Caco-2 (cell line): ENCODE measurements at regions of chr14 and their contacts with region 1.

Region 1: DNA sequence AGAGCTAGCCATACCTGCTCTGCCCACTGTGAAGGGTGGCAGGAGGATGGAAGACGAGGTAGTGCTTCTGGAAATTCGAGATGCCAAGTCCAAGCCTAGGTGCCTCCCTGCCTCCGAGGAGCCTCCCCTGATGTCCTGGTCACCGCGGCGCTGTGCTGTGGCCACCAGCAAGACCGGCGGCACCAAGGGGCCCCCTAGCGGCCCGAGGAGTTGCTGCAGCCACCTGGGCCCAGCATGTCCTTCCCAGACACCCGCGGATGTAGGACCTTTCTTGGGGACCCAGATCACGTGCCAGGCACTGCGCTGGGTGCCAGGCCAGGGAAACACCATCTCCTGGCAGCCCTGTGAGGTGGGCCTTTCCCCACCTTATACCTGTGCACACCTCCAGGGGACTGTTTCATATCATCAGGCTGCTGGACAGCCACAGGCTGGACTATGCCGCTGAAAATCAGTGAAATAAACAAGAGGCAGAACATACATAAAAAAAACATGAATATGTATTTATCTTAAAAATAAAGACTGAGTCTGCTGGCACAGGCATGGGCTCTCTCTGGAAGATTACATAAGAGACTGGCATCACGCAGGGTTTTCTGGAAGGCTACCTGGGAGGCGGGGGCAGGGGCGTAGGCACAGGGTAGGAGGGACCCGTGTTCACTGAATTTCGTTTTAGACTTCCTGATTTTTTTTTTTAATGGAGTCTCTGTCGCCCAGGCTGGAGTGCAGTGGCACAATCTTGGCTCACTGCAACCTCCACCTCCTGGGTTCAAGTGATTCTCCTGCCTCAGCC is 15.9 kb upstream of the HHIPL1 start:
- DNase-seq: peak; percentile 78 to 87
- H3K4me3 ChIP-seq: no peak overlapping the region
- H3K4me3 Mint-ChIP-seq: no peak overlapping the region
- H3K27ac Mint-ChIP-seq: no peak overlapping the region
- H3K4me1 ChIP-seq: no peaks in the 10 kb centered on the region
- H3K4me1 Mint-ChIP-seq: peaks cover 7% of the 10 kb centered on the region
- H3K27me3 ChIP-seq: no peaks in the 10 kb centered on the region
- H3K27me3 Mint-ChIP-seq: no peaks in the 10 kb centered on the region
- CTCF ChIP-seq: peak; percentile 91 to 98

Region 2: DNA sequence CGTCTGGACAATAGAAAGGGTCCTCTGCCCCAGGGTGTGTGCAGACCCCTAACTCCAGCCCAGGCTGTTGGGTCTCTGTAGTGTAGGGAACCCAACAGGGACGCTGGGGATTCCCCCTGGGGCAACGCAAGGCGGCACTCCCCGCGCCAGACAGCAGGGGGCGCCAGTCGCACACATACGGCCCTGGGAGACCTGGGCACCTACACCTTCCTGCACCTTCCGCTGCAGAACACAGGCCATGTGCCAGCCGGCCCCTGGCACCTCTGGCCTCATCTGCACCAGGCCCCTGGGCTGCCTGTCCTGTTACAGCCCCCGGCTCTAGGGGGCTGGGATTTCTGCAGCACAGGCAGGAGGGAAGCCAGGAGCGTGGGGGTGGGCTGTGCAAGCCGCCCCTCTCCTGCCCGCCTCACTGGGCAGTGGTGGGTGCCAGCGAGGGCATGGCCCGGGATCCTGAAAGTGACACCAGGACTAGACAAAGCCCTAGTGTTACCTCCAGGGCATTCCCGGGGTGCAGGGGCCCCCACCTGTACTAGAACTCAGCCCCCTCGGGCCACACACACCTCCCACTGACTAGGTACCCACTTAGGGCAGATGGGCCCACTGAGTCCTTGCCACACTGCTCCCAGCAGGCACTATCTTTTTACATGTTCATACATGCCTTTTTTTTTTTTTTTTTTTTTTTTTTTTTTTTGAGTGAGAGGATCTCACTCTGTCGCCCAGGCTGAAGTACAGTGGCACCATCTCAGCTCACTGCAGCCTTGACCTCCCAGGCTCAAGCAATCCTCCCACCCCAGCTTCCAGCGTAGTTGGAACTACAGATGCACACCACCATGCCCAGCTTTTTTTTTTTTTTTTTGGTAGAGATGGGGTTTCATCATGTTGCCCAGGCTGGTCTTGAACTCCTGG is 110.3 kb before region 1 on chr14:
- CTCF ChIA-PET with region 1: no interaction called
- POLR2A ChIA-PET with region 1: no interaction called
- intact Hi-C with region 1: loop called (anchors 1 kb)
- DNase-seq: peak; percentile 74 to 85
- H3K4me3 ChIP-seq: no peak overlapping the region
- H3K4me3 Mint-ChIP-seq: no peak overlapping the region
- H3K27ac Mint-ChIP-seq: no peak overlapping the region
- H3K4me1 ChIP-seq: peaks cover 36% of the 10 kb centered on the region
- H3K4me1 Mint-ChIP-seq: no peaks in the 10 kb centered on the region
- H3K27me3 ChIP-seq: no peaks in the 10 kb centered on the region
- H3K27me3 Mint-ChIP-seq: no peaks in the 10 kb centered on the region
- CTCF ChIP-seq: peak; percentile 91 to 94